ENCODE measurements at regions of chr3 and their contacts with region 1.

Region 1: GRCh38 chr3:123489400-123490004 is 40.6 kb upstream of the ADCY5 start:
- DNase-seq: peak; percentile 83
- H3K4me3 ChIP-seq: no peak overlapping the region
- H3K27ac ChIP-seq: no peak overlapping the region
- H3K4me1 ChIP-seq: no peaks in the 10 kb centered on the region
- H3K27me3 ChIP-seq: no peaks in the 10 kb centered on the region
- CTCF ChIP-seq: peak; percentile 93
- EP300 ChIP-seq: no peak
- RAD21 ChIP-seq: peak; percentile 98

Region 2: DNA sequence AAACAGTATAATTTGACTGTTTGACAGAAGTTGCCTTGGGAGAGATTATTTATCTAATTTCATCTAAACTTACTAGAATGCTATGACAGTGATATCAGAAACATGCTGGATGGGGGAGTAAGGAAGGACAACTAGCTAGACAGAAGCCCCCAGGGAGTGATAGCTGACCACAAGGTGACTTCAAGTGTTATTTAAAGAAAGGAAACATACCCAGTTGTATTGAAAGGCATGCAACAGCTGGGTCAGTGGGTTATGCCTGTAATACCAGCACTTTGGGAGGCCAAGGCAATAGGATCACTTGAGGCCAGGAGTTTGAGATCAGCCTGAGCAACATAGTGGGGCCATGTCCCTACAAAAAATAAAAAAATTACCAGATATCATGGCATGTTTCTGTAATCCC is 625.0 kb before region 1 on chr3:
- CTCF ChIA-PET with region 1: no interaction called
- POLR2A ChIA-PET with region 1: no interaction called
- DNase-seq: no peak
- H3K4me3 ChIP-seq: no peak overlapping the region
- H3K27ac ChIP-seq: no peak overlapping the region
- H3K4me1 ChIP-seq: no peaks in the 10 kb centered on the region
- H3K27me3 ChIP-seq: no peaks in the 10 kb centered on the region
- CTCF ChIP-seq: no peak
- EP300 ChIP-seq: no peak
- RAD21 ChIP-seq: no peak

Region 3: GRCh38 chr3:123328851-123329635 is 160.5 kb before region 1 on chr3:
- CTCF ChIA-PET with region 1: interaction called, 275 read pairs
- POLR2A ChIA-PET with region 1: no interaction called
- DNase-seq: peak; percentile 89
- H3K4me3 ChIP-seq: peak overlapping the region in 1 of 2 experiments; percentile 12; a peak in 1 of 4 replicates
- H3K27ac ChIP-seq: no peak overlapping the region
- H3K4me1 ChIP-seq: peaks cover 0 to 8% of the 10 kb centered on the region in 2 experiments; a peak in 1 of 4 replicates
- H3K27me3 ChIP-seq: peaks cover 21% of the 10 kb centered on the region
- CTCF ChIP-seq: peak; percentile 91
- EP300 ChIP-seq: no peak
- RAD21 ChIP-seq: peak; percentile 87

Region 4: DNA sequence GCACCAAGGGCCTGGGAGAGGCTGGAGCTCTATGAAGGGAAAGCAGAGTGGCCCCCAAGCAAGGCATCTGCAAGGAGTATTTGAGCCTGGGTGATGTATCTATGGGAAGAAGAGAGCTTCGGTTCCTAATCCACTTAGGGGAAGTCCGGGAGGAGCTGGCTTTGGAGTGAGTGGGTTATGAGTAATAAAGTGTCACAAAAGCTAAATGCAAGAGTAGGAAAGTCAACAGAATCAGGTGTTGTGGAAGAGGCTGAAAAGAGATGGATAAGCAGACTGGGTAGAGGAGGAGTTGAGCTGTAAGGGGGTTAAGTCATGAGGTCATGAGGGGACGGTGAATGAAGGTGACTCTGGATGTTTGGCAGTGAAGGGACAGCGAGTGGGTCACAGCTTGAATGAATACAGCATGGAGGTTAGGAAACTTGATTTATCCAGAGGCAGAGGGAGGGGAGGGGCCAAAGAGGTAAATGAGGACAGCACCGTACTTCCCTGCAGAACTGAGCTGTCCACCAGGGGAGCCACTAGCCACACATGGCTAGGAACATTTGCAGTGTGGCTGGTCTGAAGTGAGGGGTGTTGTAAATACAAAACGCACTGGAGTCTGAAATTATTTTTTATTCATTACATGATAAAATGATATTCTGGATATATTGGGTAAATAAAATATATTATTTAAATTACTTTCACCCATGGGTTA is 123.9 kb before region 1 on chr3:
- CTCF ChIA-PET with region 1: interaction called, 11 read pairs
- POLR2A ChIA-PET with region 1: no interaction called
- DNase-seq: peak; percentile 56
- H3K4me3 ChIP-seq: no peak overlapping the region; a peak in 1 of 4 replicates
- H3K27ac ChIP-seq: no peak overlapping the region
- H3K4me1 ChIP-seq: no peaks in the 10 kb centered on the region
- H3K27me3 ChIP-seq: peaks cover 34% of the 10 kb centered on the region; the same call in 1 of the 2 replicates
- CTCF ChIP-seq: peak; percentile 54
- EP300 ChIP-seq: no peak
- RAD21 ChIP-seq: peak; percentile 48

Region 5: GRCh38 chr3:123449102-123449996 is 40.2 kb before region 1 on chr3:
- CTCF ChIA-PET with region 1: interaction called, 23 read pairs
- POLR2A ChIA-PET with region 1: no interaction called
- DNase-seq: peak; percentile 91
- H3K4me3 ChIP-seq: peak overlapping the region; percentile 62 to 64
- H3K27ac ChIP-seq: no peak overlapping the region; a peak in 1 of 4 replicates
- H3K4me1 ChIP-seq: peaks cover 0 to 5% of the 10 kb centered on the region in 2 experiments; a peak in 1 of 4 replicates
- H3K27me3 ChIP-seq: peaks cover 52% of the 10 kb centered on the region
- CTCF ChIP-seq: no peak
- EP300 ChIP-seq: no peak
- RAD21 ChIP-seq: no peak

Region 6: DNA sequence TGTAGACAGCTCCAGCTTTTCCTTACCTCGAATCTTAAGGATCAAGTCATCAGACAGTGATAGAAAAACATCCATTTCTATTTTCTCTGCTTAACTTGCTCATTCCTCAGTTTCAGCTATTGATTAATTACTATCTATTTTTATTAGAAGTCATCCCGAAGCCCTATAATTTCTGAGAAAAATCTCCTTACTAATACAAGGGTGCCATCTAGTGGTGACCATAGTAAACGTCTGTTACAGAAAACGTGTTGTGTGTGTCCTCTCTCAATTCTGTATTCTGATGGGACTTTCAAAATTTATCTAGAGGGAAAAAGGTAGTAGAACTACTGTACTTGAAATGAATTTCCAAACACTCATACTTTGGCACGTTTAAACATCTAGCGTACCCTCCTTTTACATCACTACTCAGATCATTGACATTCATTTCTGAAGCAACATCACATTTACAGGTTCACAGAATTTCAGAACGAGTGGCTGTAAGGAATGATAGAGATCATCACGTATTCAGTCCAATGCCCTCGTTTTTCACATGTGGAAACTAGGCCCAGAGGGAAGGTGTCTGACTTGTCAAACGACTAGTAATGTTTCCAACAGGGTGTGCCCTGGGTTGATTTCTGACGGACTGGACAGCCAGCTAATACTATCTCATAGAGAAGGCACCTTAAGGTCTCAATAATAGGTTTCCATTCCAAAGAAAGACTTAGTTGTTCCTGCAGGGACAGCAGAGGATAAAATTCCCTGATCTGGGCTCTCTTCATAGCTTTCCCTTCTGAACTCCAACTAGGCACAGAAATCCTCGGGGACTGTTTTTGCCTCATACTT is 69.7 kb after region 1 on chr3:
- CTCF ChIA-PET with region 1: interaction called, 28 read pairs
- POLR2A ChIA-PET with region 1: no interaction called
- DNase-seq: peak; percentile 54
- H3K4me3 ChIP-seq: peak overlapping the region in 1 of 2 experiments; percentile 24; a peak in 1 of 4 replicates
- H3K27ac ChIP-seq: no peak overlapping the region
- H3K4me1 ChIP-seq: no peaks in the 10 kb centered on the region; a peak in 1 of 4 replicates
- H3K27me3 ChIP-seq: no peaks in the 10 kb centered on the region
- CTCF ChIP-seq: peak; percentile 90
- EP300 ChIP-seq: no peak
- RAD21 ChIP-seq: peak; percentile 81

Measured in SK-N-SH (cell line).